HCT116 (cell line): ENCODE measurements at regions of chr19 and their contacts with region 1.

Region 1: DNA sequence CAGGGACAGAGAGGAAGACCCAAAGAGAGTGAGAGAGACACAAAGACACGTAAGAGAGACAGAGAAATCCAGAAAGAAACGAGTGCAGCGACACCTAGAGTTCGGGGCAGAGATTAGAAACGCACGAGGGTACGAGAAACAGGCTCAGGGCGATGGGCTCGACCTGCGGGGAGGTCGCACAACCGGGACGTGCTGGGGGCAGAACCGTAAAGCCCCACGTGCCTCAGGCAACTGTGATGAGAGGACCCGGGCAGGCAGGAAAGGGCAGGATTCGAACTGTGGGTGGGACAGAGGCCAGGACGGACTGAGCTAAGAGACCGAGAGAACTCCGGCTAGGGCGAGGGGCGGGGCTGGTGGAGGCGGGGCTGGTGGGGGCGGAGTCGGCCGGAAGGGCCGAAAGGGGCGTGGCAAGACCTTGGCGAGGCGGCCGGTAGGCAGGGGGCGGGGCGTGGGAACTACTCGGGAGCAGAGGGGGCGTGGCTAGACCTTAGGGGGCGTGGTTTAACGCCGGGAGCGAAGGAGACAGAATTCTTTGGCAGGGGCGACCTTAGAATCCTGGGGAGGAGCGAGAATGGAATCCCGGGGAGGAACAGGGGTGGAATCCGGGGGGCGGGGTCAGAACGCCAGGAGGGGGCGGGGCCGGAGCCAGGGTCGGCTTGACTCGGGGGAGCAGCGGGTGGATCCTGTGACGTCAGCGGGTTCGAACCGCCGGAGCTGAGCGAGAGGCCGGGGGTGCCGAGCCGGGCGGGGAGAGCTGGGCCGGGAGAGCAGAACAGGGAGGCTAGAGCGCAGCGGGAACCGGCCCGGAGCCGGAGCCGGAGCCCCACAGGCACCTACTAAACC is at the start of gene NECTIN2:
- DNase-seq: peak; percentile 98
- ATAC-seq: peak; percentile 66
- H3K4me3 ChIP-seq: peak within 1 kb of the TSS; percentile 98 to 99
- H3K27ac ChIP-seq: peak within 1 kb of the TSS; percentile 92
- H3K4me1 ChIP-seq: peaks cover 22 to 66% of the 10 kb centered on the region in 2 experiments
- H3K27me3 ChIP-seq: no peaks in the 10 kb centered on the region
- CTCF ChIP-seq: peak; percentile 69 to 87 (median 72); a peak in 5 of 6 replicates
- POLR2A ChIP-seq: no peak
- RAD21 ChIP-seq: no peak; the same call in none of the 2 replicates
- total RNA-seq, gene NECTIN2: 96.3 TPM

Region 2: DNA sequence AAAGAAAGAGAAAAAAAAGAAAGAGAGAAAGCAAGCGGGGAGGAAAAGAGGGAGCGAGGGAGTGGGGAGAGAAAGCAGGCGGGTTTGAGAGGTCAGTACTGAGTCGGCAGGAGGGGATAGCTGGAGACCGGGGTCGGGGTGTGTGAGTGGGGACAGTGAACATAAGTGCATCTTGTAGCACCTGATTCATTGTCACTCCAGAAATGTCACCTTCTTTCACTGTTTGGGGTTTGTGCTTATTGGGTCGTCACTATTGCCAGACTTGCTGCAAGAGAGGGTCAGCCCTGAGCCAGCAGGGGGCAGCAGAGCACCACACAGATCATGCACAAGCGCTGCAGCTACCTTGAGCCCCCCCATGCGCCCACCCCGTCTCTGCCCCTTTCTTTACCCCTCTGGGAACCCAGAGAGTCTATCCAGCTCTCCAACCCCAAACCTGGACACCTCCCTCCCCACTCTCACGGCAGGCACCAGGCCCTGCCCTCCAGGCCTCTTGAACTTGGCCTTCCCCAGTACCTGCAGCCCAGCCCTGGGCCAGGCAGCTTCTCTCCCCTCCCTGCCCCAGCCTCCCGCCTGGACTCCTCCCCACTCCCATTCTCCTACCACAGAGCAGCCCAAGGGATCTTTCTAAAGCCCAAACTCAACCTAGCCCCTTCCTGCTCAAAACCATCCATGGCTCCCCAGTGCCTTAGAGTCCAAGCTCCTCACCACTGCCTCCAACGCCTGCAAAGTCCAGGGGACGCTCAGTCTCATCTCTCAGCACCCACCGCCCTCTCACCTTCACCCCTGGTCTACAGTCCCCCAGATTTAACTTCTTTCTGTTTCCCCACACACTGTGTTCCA is 156.6 kb before region 1 on chr19:
- CTCF ChIA-PET with region 1: interaction called, 5 read pairs
- POLR2A ChIA-PET with region 1: interaction called, 4 read pairs
- RAD21 ChIA-PET with region 1: no interaction called
- intact Hi-C with region 1: loop called (anchors 10 kb)
- DNase-seq: peak; percentile 50
- ATAC-seq: peak; percentile 60
- H3K4me3 ChIP-seq: no peak overlapping the region
- H3K27ac ChIP-seq: peak overlapping the region; percentile 43; the same call in 1 of the 2 replicates
- H3K4me1 ChIP-seq: peaks cover 48 to 70% of the 10 kb centered on the region in 2 experiments
- H3K27me3 ChIP-seq: no peaks in the 10 kb centered on the region
- CTCF ChIP-seq: peak; percentile 68 to 97 (median 95)
- POLR2A ChIP-seq: no peak
- RAD21 ChIP-seq: peak; percentile 92

Region 3: DNA sequence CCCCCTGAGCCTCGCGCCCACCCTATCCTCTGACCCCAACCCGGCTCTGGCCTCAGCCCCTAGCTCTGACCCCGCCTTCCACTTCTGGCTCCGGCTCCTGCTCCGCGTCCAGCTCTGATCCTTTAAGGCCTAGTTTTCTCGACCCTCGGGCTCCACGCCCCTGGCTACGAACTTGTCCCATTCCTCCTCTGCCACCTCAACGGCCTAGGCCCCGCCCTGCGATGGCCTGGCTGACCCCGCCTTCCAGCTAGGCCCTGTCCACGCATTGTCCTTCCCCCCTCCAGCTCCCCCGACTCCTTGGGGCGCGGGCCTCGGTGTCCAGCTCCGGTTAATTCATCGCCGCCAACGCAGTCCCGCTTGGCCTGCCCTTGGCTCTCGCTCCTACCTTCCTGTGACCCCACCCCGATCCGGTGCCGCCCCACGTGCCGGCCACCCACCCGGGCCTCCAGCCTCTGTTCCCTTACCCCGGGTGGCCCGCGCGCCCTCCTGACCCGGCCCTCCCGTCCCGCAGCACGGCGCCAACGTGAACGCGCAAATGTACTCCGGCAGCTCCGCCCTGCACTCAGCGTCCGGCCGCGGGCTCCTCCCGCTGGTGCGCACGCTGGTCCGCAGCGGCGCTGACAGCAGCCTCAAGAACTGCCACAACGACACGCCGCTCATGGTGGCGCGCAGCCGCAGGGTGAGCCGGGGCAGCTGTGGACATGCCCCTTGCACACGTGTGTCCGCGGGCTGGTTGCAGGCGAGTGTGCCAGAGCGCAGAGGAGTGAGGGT is 87.9 kb before region 1 on chr19:
- CTCF ChIA-PET with region 1: no interaction called
- POLR2A ChIA-PET with region 1: no interaction called
- RAD21 ChIA-PET with region 1: no interaction called
- intact Hi-C with region 1: no loop called
- DNase-seq: no peak
- ATAC-seq: no peak
- H3K4me3 ChIP-seq: no peak overlapping the region
- H3K27ac ChIP-seq: peak overlapping the region; percentile 18; the same call in 1 of the 2 replicates
- H3K4me1 ChIP-seq: peaks cover 18 to 38% of the 10 kb centered on the region in 2 experiments
- H3K27me3 ChIP-seq: no peaks in the 10 kb centered on the region
- CTCF ChIP-seq: no peak
- POLR2A ChIP-seq: no peak
- RAD21 ChIP-seq: no peak

Region 4: GRCh38 chr19:44770550-44771257 is 75.1 kb before region 1 on chr19:
- CTCF ChIA-PET with region 1: interaction called, 18 read pairs
- POLR2A ChIA-PET with region 1: interaction called, 4 read pairs
- RAD21 ChIA-PET with region 1: interaction called, 3 to 6 read pairs
- intact Hi-C with region 1: no loop called
- DNase-seq: peak; percentile 96
- ATAC-seq: peak; percentile 95
- H3K4me3 ChIP-seq: peak overlapping the region in 1 of 2 experiments; percentile 9; a peak in 1 of 4 replicates
- H3K27ac ChIP-seq: peak overlapping the region; percentile 18; the same call in 1 of the 2 replicates
- H3K4me1 ChIP-seq: peaks cover 33 to 50% of the 10 kb centered on the region in 2 experiments
- H3K27me3 ChIP-seq: no peaks in the 10 kb centered on the region
- CTCF ChIP-seq: peak; percentile 62 to 93 (median 83); a peak in 5 of 6 replicates
- POLR2A ChIP-seq: no peak
- RAD21 ChIP-seq: peak; percentile 99

Region 5: GRCh38 chr19:44785246-44785645 is 60.6 kb before region 1 on chr19:
- CTCF ChIA-PET with region 1: interaction called, 7 read pairs
- POLR2A ChIA-PET with region 1: interaction called, 3 read pairs
- RAD21 ChIA-PET with region 1: no interaction called
- intact Hi-C with region 1: loop called (anchors 2 kb)
- DNase-seq: no peak
- ATAC-seq: no peak
- H3K4me3 ChIP-seq: no peak overlapping the region
- H3K27ac ChIP-seq: no peak overlapping the region
- H3K4me1 ChIP-seq: peaks cover 3 to 6% of the 10 kb centered on the region in 2 experiments; a peak in 3 of 4 replicates
- H3K27me3 ChIP-seq: no peaks in the 10 kb centered on the region
- CTCF ChIP-seq: no peak
- POLR2A ChIP-seq: no peak
- RAD21 ChIP-seq: no peak

Region 6: DNA sequence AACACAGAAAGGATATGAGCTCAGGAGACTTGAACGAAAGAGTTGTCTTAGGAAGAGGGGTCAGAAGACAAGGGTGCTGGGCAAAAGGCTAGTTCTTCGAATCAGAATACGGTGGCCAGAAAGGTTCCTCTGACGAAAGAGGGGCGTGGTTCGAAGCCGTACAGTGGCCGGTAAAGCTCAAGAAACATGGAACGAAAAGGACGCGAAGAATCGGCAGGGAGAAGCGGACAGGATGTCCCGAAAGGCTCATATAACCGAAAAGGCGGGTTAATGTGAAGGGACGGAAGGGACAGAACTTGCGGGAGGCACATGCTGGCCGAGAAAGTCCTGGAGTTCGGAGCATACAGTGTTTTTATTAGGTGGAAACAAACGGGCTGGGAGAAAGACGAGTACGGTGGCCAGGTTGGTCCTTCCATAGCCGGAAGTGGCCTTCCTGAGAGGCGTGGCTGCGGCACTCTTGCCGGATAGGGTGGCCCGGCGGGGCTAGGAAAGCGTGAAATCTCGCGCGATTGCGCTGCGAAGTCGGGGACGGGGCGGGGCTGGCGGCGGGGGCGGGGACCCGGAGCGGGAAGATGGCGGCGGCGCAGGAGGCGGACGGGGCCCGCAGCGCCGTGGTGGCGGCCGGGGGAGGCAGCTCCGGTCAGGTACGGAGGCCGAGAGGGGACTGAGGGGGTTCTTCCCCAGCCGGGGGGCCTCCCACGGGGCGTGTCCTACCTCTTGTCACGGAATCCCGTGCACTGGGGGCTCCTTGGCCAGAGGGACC is 109.2 kb after region 1 on chr19 and contains the start of gene CLPTM1:
- CTCF ChIA-PET with region 1: no interaction called
- POLR2A ChIA-PET with region 1: no interaction called
- RAD21 ChIA-PET with region 1: no interaction called
- intact Hi-C with region 1: loop called (anchors 5 kb)
- DNase-seq: peak; percentile 95
- ATAC-seq: peak; percentile 93
- H3K4me3 ChIP-seq: peak within 1 kb of the TSS; percentile 71 to 85
- H3K27ac ChIP-seq: peak within 1 kb of the TSS; percentile 98
- H3K4me1 ChIP-seq: peaks cover 11 to 34% of the 10 kb centered on the region in 2 experiments; a peak in 3 of 4 replicates
- H3K27me3 ChIP-seq: no peaks in the 10 kb centered on the region
- CTCF ChIP-seq: no peak
- POLR2A ChIP-seq: peak; percentile 93
- RAD21 ChIP-seq: no peak
- total RNA-seq, gene CLPTM1: 102 TPM